A673 (cell line): ENCODE measurements at regions of chr12 and their contacts with region 1.

Region 1: GRCh38 chr12:10673660-10674384 is at the start of gene STYK1:
- DNase-seq: peak; percentile 70
- H3K4me3 ChIP-seq: peak within 1 kb of the TSS; percentile 48
- H3K27ac ChIP-seq: no peak within 1 kb of the TSS
- H3K4me1 ChIP-seq: no peaks in the 10 kb centered on the region
- H3K27me3 ChIP-seq: no peaks in the 10 kb centered on the region
- CTCF ChIP-seq: peak; percentile 96
- total RNA-seq, gene STYK1: 0.77 and 0.94 TPM in 2 replicates

Region 2: DNA sequence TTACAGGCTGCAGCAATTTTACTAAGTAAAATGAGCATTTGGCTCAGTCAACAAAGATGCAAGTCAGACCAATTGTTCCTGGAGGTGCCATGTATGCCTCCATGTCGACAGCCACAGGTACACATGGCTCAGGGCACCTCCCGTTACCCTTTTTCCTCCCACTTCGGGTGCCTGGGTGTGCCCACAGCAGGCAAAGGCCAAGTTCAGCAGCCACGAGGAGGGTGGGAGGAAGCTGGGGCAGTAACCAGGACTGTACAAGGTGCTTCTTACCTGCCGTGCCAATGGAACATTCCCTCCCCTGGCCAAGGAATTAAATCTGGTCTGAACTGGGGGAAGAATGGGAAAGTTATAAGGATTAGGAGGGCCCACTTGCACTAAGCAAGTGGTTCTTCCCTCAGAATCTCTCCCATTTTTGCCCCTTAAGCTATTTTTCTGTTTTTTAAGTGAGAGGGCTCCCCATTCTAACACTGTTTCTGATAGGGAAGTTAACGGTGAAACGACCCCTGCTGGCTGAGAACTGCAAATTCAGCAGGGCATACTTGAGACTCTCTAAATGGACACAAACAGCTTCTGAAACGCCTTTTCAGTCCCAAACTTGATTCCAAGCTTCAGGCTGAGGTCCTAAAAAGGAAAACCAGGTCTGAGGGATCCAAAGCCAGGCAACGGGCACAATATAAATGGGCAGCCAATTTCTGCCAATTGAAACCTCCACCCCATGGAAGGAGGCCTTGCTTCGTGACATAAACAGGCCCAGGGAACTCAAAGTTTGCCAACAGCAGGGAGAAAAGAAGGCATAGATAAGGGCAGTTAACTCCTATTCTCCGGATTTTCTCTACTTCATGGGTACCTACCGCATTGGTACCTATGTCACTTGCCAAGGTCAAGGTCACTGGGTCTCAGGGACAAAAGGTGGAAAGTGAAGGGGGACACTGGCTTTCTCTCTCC is 965.7 kb before region 1 on chr12:
- CTCF ChIA-PET with region 1: no interaction called
- POLR2A ChIA-PET with region 1: no interaction called
- intact Hi-C with region 1: no loop called
- DNase-seq: peak; percentile 66
- H3K4me3 ChIP-seq: no peak overlapping the region
- H3K27ac ChIP-seq: no peak overlapping the region
- H3K4me1 ChIP-seq: no peaks in the 10 kb centered on the region
- H3K27me3 ChIP-seq: no peaks in the 10 kb centered on the region
- CTCF ChIP-seq: peak; percentile 88

Region 3: GRCh38 chr12:10331642-10332239 is 342.1 kb before region 1 on chr12:
- CTCF ChIA-PET with region 1: no interaction called
- POLR2A ChIA-PET with region 1: no interaction called
- intact Hi-C with region 1: loop called (anchors 5 kb)
- DNase-seq: peak; percentile 60
- H3K4me3 ChIP-seq: no peak overlapping the region
- H3K27ac ChIP-seq: no peak overlapping the region
- H3K4me1 ChIP-seq: no peaks in the 10 kb centered on the region
- H3K27me3 ChIP-seq: no peaks in the 10 kb centered on the region
- CTCF ChIP-seq: peak; percentile 74

Region 4: DNA sequence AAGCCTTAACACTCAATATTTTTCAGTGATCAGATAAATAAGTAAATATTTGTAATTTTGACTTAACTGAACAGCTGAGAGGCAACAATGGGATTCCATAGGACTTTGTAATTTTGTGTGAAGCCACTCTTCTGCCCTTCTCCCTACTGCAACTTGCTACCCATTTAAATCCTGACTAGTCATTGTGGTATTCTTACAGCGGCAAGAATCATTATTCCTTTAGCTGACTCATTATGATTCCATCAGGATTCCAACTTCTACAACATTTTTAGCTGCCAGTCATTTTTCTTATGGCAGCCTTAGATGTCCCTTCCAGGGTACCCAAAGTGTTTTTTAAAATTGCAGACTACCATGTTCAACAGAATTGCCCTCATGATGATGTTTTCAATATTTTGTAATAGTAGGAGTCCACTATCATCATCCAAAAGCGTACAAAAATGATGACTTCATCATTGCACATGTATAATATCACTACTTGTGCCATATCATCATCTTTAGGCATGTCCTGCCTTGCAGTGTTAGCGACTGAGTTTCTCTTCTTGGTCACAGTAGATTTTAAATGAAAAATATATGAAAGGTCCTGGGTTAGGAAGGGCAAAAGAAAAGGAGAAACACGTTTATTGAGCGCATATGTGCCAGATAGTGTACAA is 55.4 kb before region 1 on chr12:
- CTCF ChIA-PET with region 1: no interaction called
- POLR2A ChIA-PET with region 1: no interaction called
- intact Hi-C with region 1: loop called (anchors 5 kb)
- DNase-seq: no peak
- H3K4me3 ChIP-seq: no peak overlapping the region
- H3K27ac ChIP-seq: no peak overlapping the region
- H3K4me1 ChIP-seq: no peaks in the 10 kb centered on the region
- H3K27me3 ChIP-seq: no peaks in the 10 kb centered on the region
- CTCF ChIP-seq: no peak